CD4-positive, alpha-beta memory T cell (primary cell): ENCODE measurements at regions of chr2 and their contacts with region 1.

Region 1: GRCh38 chr2:64873472-64873924 is 115.7 kb upstream of the SLC1A4 start:
- DNase-seq: peak; percentile 64 to 76 (median 68)
- H3K4me3 ChIP-seq: peak overlapping the region in 1 of 2 donors; percentile 7
- H3K4me3 Mint-ChIP-seq: peak overlapping the region in 7 of 8 donors; percentile 0 to 70 (median 31)
- H3K27ac ChIP-seq: no peak overlapping the region
- H3K27ac Mint-ChIP-seq: peak overlapping the region in 3 of 7 donors; percentile 23 to 48 (median 26)
- H3K4me1 ChIP-seq: peaks cover 8% of the 10 kb centered on the region
- H3K4me1 Mint-ChIP-seq: peaks cover 6 to 7% (median 6%) of the 10 kb centered on the region in 4 donors
- H3K27me3 ChIP-seq: no peaks in the 10 kb centered on the region
- H3K27me3 Mint-ChIP-seq: peaks cover 1 to 3% of the 10 kb centered on the region in 2 donors

Region 2: DNA sequence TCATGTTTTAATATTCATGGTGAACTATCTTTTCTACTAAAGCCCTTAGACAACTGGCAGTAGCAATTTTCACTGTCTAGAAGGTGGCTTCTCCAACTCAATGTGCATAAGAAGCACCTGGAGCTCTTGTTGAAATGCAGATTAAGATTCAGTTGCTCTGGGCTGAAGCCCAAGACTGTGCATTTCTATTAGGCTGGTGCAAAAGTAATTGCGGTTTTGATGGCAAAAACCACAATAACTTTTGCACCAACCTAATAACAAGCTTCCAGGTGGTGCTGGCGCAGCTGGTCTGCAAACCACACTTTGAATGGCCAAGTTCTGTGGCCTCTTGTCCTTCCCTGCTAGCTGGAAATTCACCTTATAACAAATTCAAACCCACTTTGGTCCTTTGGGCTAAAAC is 827.6 kb before region 1 on chr2:
- CTCF ChIA-PET with region 1: no interaction called
- POLR2A ChIA-PET with region 1: no interaction called
- intact Hi-C with region 1: loop called (anchors 5 kb)
- DNase-seq: no peak
- H3K4me3 ChIP-seq: no peak overlapping the region
- H3K4me3 Mint-ChIP-seq: no peak overlapping the region
- H3K27ac ChIP-seq: no peak overlapping the region
- H3K27ac Mint-ChIP-seq: no peak overlapping the region
- H3K4me1 ChIP-seq: peaks cover 8% of the 10 kb centered on the region
- H3K4me1 Mint-ChIP-seq: peaks cover 7 to 9% (median 8%) of the 10 kb centered on the region in 4 donors
- H3K27me3 ChIP-seq: no peaks in the 10 kb centered on the region
- H3K27me3 Mint-ChIP-seq: no peaks in the 10 kb centered on the region

Region 3: DNA sequence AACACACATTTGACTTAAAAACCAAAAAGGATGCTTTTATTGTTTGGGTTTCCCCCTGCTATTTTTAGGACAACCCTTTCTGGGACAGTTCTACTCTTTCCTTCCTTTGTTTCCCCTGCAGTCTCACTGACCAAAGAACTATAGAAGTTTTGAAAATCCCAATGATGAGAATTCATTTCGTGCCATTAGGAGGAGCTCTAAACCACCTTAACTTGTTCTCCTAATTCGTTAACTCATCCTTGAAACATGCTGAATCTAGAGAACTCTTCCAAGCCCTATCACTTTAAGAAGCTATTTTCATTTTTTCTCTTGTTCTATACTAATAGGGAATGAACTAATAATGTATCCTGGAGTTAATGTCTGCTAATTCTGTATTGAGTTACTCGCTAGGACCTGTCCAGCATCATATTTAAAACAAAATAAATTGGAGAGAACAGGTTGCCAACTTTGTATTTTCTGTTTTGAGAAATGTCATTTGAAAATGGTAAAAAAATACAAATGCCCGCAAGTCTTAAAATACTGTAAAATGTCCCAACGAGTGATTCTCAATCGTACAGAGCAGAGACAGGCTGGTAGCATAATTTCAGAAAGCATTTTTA is 286.5 kb before region 1 on chr2:
- CTCF ChIA-PET with region 1: interaction called, 16 read pairs
- POLR2A ChIA-PET with region 1: no interaction called
- intact Hi-C with region 1: loop called (anchors 1 kb)
- DNase-seq: peak in 4 of 5 donors; percentile 26 to 46 (median 38)
- H3K4me3 ChIP-seq: no peak overlapping the region
- H3K4me3 Mint-ChIP-seq: no peak overlapping the region
- H3K27ac ChIP-seq: no peak overlapping the region
- H3K27ac Mint-ChIP-seq: no peak overlapping the region
- H3K4me1 ChIP-seq: no peaks in the 10 kb centered on the region
- H3K4me1 Mint-ChIP-seq: peaks cover 0 to 4% (median 2%) of the 10 kb centered on the region in 4 donors
- H3K27me3 ChIP-seq: no peaks in the 10 kb centered on the region
- H3K27me3 Mint-ChIP-seq: no peaks in the 10 kb centered on the region